WTC11 (cell line): ENCODE measurements at regions of chr6 and their contacts with region 1.

Region 1: GRCh38 chr6:37819177-37819823 is at the start of gene ZFAND3:
- DNase-seq: peak; percentile 96
- ATAC-seq: peak; percentile 76
- H3K4me3 Mint-ChIP-seq: peak within 1 kb of the TSS; percentile 94
- H3K27ac Mint-ChIP-seq: peak within 1 kb of the TSS; percentile 95
- H3K4me1 Mint-ChIP-seq: peaks cover 48% of the 10 kb centered on the region
- H3K27me3 Mint-ChIP-seq: no peaks in the 10 kb centered on the region
- CTCF ChIP-seq: no peak
- total RNA-seq, gene ZFAND3: 45.4 to 51.6 TPM (median 50.3 TPM) in 3 replicates

Region 2: GRCh38 chr6:37705239-37706051 is 113.9 kb before region 1 on chr6:
- CTCF ChIA-PET with region 1: interaction called, 14 read pairs
- POLR2A ChIA-PET with region 1: no interaction called
- DNase-seq: peak; percentile 87
- ATAC-seq: peak; percentile 77
- H3K4me3 Mint-ChIP-seq: peak overlapping the region; percentile 72
- H3K27ac Mint-ChIP-seq: peak overlapping the region; percentile 97
- H3K4me1 Mint-ChIP-seq: peaks cover 16% of the 10 kb centered on the region
- H3K27me3 Mint-ChIP-seq: peaks cover 52% of the 10 kb centered on the region
- CTCF ChIP-seq: peak; percentile 76

Region 3: GRCh38 chr6:37717836-37718251 is 101.5 kb before region 1 on chr6:
- CTCF ChIA-PET with region 1: no interaction called
- POLR2A ChIA-PET with region 1: no interaction called
- DNase-seq: no peak
- ATAC-seq: no peak
- H3K4me3 Mint-ChIP-seq: no peak overlapping the region
- H3K27ac Mint-ChIP-seq: no peak overlapping the region
- H3K4me1 Mint-ChIP-seq: peaks cover 7% of the 10 kb centered on the region
- H3K27me3 Mint-ChIP-seq: peaks cover 16% of the 10 kb centered on the region
- CTCF ChIP-seq: no peak

Region 4: DNA sequence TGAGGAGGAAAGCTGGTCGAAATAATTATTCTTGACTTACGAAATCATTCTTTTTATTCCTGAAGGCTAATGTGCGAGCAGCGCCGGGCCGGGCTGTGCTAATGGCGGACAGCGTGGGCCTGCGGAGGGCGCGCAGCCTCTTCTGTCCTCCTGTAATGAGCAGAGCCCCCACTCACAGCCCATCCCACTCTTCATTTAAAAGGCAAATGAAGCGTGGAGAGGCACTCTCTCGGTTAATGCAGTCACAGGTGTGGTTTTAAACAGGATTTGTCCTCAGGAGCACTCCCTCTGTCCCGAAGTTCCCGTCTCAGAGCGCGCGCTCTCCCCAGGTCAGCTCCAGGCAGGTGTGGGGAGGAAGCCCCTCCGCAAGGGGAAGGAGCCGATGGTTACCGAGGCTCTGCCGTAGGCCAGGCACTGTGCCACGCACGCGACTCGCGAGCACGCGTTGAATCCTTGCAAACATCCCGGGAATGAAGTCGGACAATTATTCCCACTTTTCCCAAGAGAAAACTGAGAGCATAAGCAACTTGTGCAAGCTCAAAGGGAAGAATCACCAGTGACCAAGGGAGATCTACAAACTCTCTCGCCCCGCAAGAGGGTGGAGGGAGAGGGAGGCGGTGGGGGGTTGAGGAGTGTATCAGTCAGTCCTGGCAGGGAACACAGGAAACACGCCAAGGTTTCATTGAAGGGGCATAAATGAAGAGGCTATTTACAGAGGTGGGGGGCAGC is 35.3 kb before region 1 on chr6:
- CTCF ChIA-PET with region 1: interaction called, 11 read pairs
- POLR2A ChIA-PET with region 1: interaction called, 13 read pairs
- DNase-seq: peak; percentile 24
- ATAC-seq: peak; percentile 23
- H3K4me3 Mint-ChIP-seq: peak overlapping the region; percentile 84
- H3K27ac Mint-ChIP-seq: peak overlapping the region; percentile 91; the same call in 1 of the 2 replicates
- H3K4me1 Mint-ChIP-seq: peaks cover 59% of the 10 kb centered on the region
- H3K27me3 Mint-ChIP-seq: peaks cover 50% of the 10 kb centered on the region
- CTCF ChIP-seq: no peak

Region 5: DNA sequence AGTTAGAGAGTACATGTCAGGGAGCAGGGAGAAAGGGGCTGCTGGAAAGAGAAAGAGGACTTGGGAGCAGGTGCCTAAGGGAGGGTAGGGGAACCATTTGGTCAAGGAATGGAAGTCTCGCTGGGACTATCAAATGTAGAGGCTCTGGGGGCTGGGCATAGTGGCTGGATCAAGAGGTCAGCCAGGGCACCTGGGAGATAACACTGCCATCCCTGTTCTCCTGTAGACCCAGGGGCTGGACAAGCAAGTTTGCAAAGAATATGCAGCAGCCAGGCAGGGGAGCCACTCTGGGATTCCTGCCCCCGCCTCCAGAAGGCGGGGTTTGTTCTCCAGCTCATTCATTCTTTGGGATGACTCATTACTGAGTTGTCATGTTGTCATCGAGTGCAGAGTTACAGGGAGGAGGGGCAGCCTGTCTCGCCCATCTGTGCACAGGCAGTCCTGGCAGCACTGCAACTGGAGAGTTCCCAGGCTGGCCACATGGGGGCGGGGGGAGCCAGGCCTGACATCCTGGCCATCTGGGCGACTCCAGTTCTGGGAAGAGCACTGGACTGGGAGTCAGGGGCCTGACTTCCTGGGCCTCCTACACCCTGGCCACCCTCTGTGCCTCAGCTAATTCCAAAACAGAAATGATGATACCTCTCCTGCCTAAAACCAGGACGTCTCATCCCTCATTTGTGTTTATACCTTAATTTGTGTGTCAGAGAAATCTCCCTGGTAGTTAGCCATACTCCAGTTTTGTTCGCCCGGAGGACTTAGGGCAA is 28.0 kb before region 1 on chr6:
- CTCF ChIA-PET with region 1: interaction called, 28 read pairs
- POLR2A ChIA-PET with region 1: interaction called, 12 read pairs
- DNase-seq: peak; percentile 90
- ATAC-seq: peak; percentile 99
- H3K4me3 Mint-ChIP-seq: no peak overlapping the region; the same call in 1 of the 2 replicates
- H3K27ac Mint-ChIP-seq: peak overlapping the region; percentile 72
- H3K4me1 Mint-ChIP-seq: peaks cover 29% of the 10 kb centered on the region
- H3K27me3 Mint-ChIP-seq: peaks cover 2% of the 10 kb centered on the region
- CTCF ChIP-seq: peak; percentile 86

Region 6: DNA sequence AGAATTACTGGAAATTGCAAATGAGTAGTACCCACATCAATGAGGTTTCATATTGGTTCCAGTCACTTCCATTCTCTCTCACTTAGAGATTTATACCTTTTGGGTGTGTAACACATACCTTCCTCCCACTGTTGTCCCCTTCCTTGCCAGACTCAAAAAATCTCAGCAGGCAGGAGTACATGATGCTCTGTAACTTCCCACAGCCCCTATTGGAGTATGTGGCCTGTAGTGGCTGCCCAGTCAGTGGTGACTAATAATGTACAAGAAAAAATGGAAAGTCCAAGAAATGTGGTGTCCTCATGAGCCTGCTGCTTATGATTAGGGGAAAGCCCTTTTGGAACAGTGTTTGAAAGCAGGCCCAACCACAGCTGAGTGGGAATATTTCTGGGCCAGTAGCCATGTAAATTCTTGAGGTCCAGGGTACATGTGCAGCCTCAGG is 312.2 kb after region 1 on chr6:
- CTCF ChIA-PET with region 1: no interaction called
- POLR2A ChIA-PET with region 1: no interaction called
- DNase-seq: no peak
- ATAC-seq: no peak
- H3K4me3 Mint-ChIP-seq: no peak overlapping the region
- H3K27ac Mint-ChIP-seq: no peak overlapping the region
- H3K4me1 Mint-ChIP-seq: peaks cover 24% of the 10 kb centered on the region
- H3K27me3 Mint-ChIP-seq: no peaks in the 10 kb centered on the region
- CTCF ChIP-seq: no peak